ENCODE measurements at regions of chr18 and their contacts with region 1.

Region 1: DNA sequence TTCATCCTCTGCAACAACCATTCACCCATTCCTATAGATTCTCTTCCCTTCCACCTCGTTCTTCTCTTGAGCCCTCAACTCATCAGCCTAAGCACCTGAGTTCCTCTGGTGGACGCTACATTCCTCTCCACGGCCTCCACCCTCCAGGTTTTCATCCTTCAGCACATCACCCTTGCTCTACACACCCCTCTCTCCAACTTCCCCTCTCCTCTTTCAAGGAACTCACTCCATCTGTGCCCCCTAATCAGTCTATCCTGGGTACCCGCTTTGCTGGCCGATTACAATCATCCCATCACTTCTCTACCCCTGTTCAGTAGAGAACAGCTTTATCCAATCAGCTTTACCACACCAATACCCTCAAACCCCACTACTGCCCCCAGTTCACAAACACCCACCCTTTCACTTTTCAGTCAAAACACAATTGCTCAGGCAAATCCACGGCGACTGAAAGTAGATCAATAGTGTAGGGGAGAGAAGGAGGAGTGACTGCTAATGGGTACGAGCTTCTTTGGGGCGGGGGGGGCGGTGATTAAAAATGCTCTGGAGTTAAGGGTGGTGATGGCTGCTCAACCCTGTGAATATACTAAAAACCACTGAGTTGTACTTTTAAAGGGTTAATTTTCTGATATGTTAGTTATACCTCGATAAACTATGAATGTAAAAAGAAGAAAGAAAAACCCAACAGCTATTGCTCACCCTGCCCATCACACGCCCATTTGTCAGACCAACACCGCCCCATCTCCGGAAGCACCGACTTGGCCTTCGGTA is 857 bp downstream of the DYM start:
- DNase-seq: no peak
- H3K4me3 ChIP-seq: peak overlapping the region; percentile 99
- H3K27ac ChIP-seq: peak overlapping the region; percentile 62
- H3K4me1 ChIP-seq: peaks cover 13% of the 10 kb centered on the region
- H3K27me3 ChIP-seq: no peaks in the 10 kb centered on the region
- CTCF ChIP-seq: no peak

Region 2: GRCh38 chr18:48959921-48960920 is 499.4 kb before region 1 on chr18:
- CTCF ChIA-PET with region 1: no interaction called
- POLR2A ChIA-PET with region 1: interaction called, 16 read pairs
- intact Hi-C with region 1: no loop called
- DNase-seq: peak; percentile 85
- H3K4me3 ChIP-seq: no peak overlapping the region
- H3K27ac ChIP-seq: peak overlapping the region; percentile 2
- H3K4me1 ChIP-seq: peaks cover 22% of the 10 kb centered on the region
- H3K27me3 ChIP-seq: no peaks in the 10 kb centered on the region
- CTCF ChIP-seq: no peak

Region 3: GRCh38 chr18:49510393-49511115 is 51.0 kb after region 1 on chr18:
- CTCF ChIA-PET with region 1: no interaction called
- POLR2A ChIA-PET with region 1: no interaction called
- intact Hi-C with region 1: no loop called
- DNase-seq: peak; percentile 74
- H3K4me3 ChIP-seq: no peak overlapping the region
- H3K27ac ChIP-seq: no peak overlapping the region
- H3K4me1 ChIP-seq: peaks cover 2% of the 10 kb centered on the region
- H3K27me3 ChIP-seq: no peaks in the 10 kb centered on the region
- CTCF ChIP-seq: peak; percentile 92

Region 4: GRCh38 chr18:49561289-49562193 is 102.0 kb after region 1 on chr18 and contains the start of gene LIPG:
- CTCF ChIA-PET with region 1: no interaction called
- POLR2A ChIA-PET with region 1: no interaction called
- intact Hi-C with region 1: no loop called
- DNase-seq: peak; percentile 83
- H3K4me3 ChIP-seq: peak within 1 kb of the TSS; percentile 44
- H3K27ac ChIP-seq: no peak within 1 kb of the TSS
- H3K4me1 ChIP-seq: peaks cover 15% of the 10 kb centered on the region
- H3K27me3 ChIP-seq: peaks cover 27% of the 10 kb centered on the region
- CTCF ChIP-seq: no peak
- total RNA-seq, gene LIPG: 5.8 and 8.4 TPM in 2 replicates

Region 5: DNA sequence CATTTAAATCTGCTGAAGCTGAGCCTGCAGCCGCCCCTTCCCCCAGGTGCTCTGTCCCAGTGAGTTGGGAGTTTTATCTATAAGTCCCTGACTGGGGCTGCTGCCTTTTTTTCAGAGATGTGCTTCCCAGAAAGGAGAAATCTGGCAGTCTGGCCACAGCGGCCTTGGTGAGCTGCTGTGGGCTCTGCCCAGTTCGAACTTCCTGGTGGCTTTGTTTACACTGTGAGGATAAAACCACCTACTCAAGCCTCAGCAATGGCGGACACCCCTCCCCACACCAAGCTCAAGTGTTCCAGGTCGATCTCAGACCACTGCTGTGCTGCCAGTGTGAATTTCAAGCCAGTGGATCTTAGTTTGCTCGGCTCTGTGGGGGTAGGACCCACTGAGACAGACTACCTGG is 256.4 kb after region 1 on chr18:
- CTCF ChIA-PET with region 1: no interaction called
- POLR2A ChIA-PET with region 1: interaction called, 15 read pairs
- intact Hi-C with region 1: no loop called
- DNase-seq: no peak
- H3K4me3 ChIP-seq: no peak overlapping the region
- H3K27ac ChIP-seq: no peak overlapping the region
- H3K4me1 ChIP-seq: no peaks in the 10 kb centered on the region
- H3K27me3 ChIP-seq: no peaks in the 10 kb centered on the region
- CTCF ChIP-seq: no peak

Measured in A673 (cell line).